ENCODE measurements at regions of chr21 and their contacts with region 1.

Region 1: GRCh38 chr21:31088315-31088714 is 50.0 kb upstream of the KRTAP19-8 start:
- DNase-seq: peak in 2 of 6 donors; percentile 21 to 53
- ATAC-seq: no peak
- H3K4me3 ChIP-seq: no peak overlapping the region
- H3K27ac ChIP-seq: no peak overlapping the region
- H3K4me1 ChIP-seq: no peaks in the 10 kb centered on the region
- H3K27me3 ChIP-seq: peaks cover 0 to 4% (median 0%) of the 10 kb centered on the region in 4 donors
- CTCF ChIP-seq: no peak

Region 2: DNA sequence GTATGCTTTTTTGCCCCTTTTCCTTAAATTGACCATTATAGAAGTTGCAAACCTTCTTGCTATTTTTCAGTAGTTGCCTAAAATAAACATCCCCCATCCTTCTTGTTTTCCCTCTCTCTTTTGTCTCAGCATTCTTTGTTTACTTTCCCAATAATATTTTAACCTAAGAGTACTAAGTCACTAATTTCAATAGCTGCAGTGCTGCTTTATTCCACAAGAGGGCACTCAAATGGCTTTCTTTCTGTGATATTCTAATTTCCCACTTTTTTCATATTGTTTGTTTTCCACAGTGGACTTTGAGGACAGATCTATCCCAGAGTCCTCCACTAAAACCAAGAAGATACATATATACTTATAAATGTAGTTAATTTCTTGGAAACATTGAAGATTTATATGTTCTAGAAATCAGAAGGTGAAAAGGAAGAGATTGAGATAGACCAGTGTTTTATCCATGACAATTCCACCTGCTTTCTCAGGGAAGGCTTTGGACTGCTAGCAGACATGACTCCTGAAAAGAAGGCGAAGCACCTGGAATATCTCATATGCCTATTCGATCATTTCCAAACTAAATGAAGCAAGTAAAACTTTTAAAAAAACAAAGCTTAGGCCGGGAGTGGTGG is 1043.8 kb before region 1 on chr21:
- intact Hi-C with region 1: loop called in 1 of 3 experiments (anchors 10 kb)
- DNase-seq: peak in 1 of 6 donors; percentile 8
- ATAC-seq: peak in 3 of 4 donors; percentile 22 to 50 (median 50)
- H3K4me3 ChIP-seq: no peak overlapping the region
- H3K27ac ChIP-seq: no peak overlapping the region
- H3K4me1 ChIP-seq: no peaks in the 10 kb centered on the region
- H3K27me3 ChIP-seq: no peaks in the 10 kb centered on the region
- CTCF ChIP-seq: peak; percentile 62 to 81 (median 80)

Region 3: DNA sequence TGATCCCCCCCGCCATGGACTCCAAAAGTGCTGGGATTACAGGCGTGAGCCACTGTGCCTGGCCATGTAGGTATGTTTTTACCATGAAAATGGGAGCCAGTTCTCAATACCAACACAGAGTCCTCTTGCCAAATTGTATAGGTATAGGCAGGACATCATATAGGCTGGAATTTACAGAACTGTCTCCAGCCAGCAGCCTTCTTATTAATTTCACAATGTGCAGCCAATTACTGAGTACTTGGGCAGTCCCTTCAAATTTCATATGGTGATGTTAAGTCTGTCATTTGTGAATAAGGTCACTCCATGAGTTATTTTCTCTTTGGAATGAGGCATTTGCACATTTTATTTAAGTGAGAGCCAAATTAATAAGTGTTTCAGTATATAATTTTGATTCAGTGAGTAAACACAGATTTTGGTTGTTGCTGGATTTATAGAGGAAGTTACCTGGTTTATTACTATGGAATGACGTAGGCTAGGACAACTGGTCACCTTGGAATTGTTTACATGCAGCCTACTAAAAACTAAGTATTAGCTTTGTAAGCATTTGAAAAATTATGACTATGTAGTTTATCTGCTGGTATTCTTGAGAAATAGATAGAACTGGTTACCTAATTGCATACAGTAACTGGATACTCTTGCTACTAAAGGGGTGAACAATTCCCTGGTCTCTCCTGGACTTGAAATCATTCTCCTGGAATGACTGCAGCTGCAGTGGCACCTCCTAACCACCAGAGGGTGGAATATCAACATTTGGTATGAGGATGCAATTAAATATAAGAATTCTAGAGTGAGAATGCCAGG is 747.7 kb before region 1 on chr21:
- intact Hi-C with region 1: loop called in 2 of 3 experiments (anchors 10 kb)
- DNase-seq: peak in 3 of 6 donors; percentile 17 to 65 (median 57)
- ATAC-seq: peak; percentile 56 to 77 (median 68)
- H3K4me3 ChIP-seq: no peak overlapping the region
- H3K27ac ChIP-seq: no peak overlapping the region
- H3K4me1 ChIP-seq: no peaks in the 10 kb centered on the region
- H3K27me3 ChIP-seq: no peaks in the 10 kb centered on the region
- CTCF ChIP-seq: peak; percentile 62 to 89 (median 79)